Right cardiac atrium (tissue), 5 donors: ENCODE measurements at regions of chr12 and their contacts with region 1.

Region 1: DNA sequence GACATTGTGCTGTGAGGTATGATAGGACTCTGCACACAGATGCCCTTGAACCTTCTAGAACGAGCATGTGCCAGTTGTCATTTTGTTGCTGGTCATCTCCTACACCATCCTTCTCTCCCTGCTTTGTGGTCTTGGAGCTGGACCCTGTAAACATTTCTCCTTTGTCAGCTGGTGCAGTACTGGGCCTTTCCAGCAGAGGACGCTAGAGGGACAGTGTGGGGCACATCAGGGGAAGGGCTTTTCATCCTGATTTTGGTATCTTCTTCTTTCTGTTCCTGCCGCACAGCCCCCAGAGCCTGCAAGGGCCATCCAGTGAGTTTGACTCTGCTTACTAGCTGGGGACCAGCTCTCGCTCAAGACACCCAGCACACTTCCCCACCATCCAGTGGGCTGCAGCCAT is 484.6 kb downstream of the AACS start:
- DNase-seq: no peak
- ATAC-seq: no peak
- H3K4me3 ChIP-seq: no peak overlapping the region
- H3K27ac ChIP-seq: no peak overlapping the region
- H3K4me1 ChIP-seq: no peaks in the 10 kb centered on the region
- H3K27me3 ChIP-seq: no peaks in the 10 kb centered on the region

Region 2: DNA sequence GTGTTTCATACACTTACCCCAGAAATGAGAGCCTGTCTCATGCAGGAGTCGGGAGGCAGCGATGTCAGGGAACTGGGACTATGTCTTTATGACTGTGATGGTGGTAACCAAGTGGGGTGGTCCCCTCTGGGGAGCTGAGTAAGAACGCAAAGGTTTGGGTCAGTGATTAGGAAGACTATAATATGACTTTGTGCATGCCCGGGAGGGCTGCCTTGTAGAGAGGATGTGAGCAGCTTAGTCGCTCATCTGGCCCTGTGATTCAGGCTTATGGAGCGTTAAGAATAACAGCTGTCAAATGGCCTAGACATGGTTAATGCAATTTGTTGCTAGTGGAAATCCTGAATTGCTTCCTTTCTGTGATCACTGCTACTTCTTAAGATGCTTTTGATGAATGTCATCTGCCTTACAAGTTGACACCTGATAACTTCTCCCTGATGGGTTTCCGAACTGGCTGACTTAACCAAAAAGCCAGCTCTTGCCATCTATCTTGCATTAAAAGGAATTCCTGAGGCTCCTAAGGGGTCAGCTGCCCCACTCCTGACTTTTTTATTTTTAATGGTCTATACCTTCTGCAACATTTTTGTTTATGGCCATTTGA is 520.0 kb before region 1 on chr12:
- intact Hi-C with region 1: no loop called
- DNase-seq: no peak
- ATAC-seq: no peak
- H3K4me3 ChIP-seq: no peak overlapping the region
- H3K27ac ChIP-seq: no peak overlapping the region
- H3K4me1 ChIP-seq: no peaks in the 10 kb centered on the region
- H3K27me3 ChIP-seq: no peaks in the 10 kb centered on the region

Region 3: GRCh38 chr12:125053821-125054220 is 496.0 kb before region 1 on chr12:
- intact Hi-C with region 1: no loop called
- DNase-seq: no peak
- ATAC-seq: no peak
- H3K4me3 ChIP-seq: no peak overlapping the region
- H3K27ac ChIP-seq: no peak overlapping the region
- H3K4me1 ChIP-seq: no peaks in the 10 kb centered on the region
- H3K27me3 ChIP-seq: no peaks in the 10 kb centered on the region

Region 4: GRCh38 chr12:125683748-125684381 is 134.0 kb after region 1 on chr12:
- intact Hi-C with region 1: loop called in 1 of 4 experiments (anchors 10 kb)
- DNase-seq: peak in 2 of 3 donors; percentile 69 to 73
- ATAC-seq: peak; percentile 51 to 54
- H3K4me3 ChIP-seq: no peak overlapping the region
- H3K27ac ChIP-seq: no peak overlapping the region
- H3K4me1 ChIP-seq: no peaks in the 10 kb centered on the region
- H3K27me3 ChIP-seq: no peaks in the 10 kb centered on the region